ENCODE measurements at regions of chr6 and their contacts with region 1.

Region 1: DNA sequence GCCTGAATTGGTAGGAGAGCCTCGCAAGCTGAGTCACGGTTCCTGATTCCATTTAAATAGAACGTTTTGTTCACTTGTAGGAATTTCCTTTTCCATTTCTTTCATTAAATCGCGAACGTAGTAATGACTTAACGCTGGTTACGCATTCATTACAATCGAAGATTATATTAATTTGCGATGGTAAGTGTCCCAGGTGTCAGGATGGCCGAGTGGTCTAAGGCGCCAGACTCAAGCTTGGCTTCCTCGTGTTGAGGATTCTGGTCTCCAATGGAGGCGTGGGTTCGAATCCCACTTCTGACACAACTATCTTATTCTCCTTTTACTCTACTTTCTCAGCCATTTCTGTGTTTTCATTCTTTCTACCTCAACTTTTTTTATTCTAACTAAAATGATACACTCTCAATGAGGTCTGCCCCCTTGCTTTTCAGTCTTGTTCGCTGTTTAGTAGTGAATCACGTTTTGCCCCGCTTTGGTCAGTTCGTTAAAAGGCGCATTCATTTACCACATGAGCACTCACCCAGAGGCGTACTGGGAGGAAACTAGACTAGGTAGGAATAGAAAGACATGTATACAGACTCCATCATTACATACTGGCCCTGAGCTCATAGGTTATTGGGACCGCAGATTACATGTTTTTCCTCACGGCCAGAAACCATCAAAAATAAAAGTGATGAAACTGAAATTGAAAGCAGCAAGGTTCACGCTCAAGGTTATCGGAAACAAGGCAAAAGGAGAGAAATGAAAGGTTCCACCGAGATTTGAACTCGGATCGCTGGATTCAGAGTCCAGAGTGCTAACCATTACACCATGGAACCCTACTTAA is 17.3 kb upstream of the TRIM27 start:
- DNase-seq: peak; percentile 77 to 80
- H3K4me3 ChIP-seq: peak overlapping the region; percentile 65
- H3K27ac ChIP-seq: peak overlapping the region; percentile 76
- H3K4me1 ChIP-seq: peaks cover 24% of the 10 kb centered on the region
- H3K27me3 ChIP-seq: no peaks in the 10 kb centered on the region
- CTCF ChIP-seq: no peak

Region 2: GRCh38 chr6:28789553-28790083 is 151.5 kb before region 1 on chr6:
- CTCF ChIA-PET with region 1: no interaction called
- POLR2A ChIA-PET with region 1: no interaction called
- intact Hi-C with region 1: loop called (anchors 5 kb)
- DNase-seq: peak; percentile 61 to 64
- H3K4me3 ChIP-seq: peak overlapping the region; percentile 65
- H3K27ac ChIP-seq: no peak overlapping the region; the same call in 1 of the 2 replicates
- H3K4me1 ChIP-seq: peaks cover 5% of the 10 kb centered on the region; the same call in 1 of the 2 replicates
- H3K27me3 ChIP-seq: no peaks in the 10 kb centered on the region; the same call in 1 of the 2 replicates
- CTCF ChIP-seq: no peak

Region 3: GRCh38 chr6:28863604-28864320 is 77.3 kb before region 1 on chr6:
- CTCF ChIA-PET with region 1: no interaction called
- POLR2A ChIA-PET with region 1: no interaction called
- intact Hi-C with region 1: loop called (anchors 1 kb)
- DNase-seq: peak; percentile 77 to 85
- H3K4me3 ChIP-seq: peak overlapping the region; percentile 81
- H3K27ac ChIP-seq: peak overlapping the region; percentile 37
- H3K4me1 ChIP-seq: peaks cover 12% of the 10 kb centered on the region
- H3K27me3 ChIP-seq: no peaks in the 10 kb centered on the region
- CTCF ChIP-seq: peak; percentile 35; the same call in 1 of the 2 replicates

Region 4: DNA sequence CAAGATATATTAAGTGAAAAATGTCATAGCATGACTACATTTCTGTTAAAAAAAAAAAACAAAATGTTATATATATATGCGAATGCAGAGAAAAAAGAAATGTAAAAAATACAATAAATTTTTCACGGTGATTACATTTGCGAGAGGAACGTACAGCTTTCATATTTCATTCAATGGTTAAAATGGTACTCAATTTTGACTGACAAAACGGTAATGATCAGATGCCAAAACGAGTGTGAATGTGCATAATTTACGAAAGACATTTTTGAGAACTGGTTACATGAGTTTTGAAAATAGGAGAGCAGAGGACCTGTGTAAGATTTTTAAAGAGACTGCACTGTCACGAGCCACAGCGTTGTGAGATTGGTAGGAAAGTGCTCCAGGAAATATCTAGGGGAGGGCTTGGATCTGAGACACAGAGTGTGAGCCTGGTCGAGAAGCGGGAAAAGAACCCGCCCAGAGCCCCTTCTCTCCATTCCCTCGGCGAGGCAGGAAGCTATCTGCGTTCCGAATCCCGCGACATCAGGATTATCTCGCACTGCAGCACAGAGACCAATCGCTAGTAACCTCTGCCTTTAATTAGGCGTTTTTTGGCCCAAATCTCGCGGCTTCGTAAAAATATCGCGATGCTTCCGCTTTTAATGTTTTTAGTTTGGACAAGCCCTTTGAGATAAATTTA is 45.8 kb before region 1 on chr6:
- CTCF ChIA-PET with region 1: no interaction called
- POLR2A ChIA-PET with region 1: no interaction called
- intact Hi-C with region 1: loop called (anchors 1 kb)
- DNase-seq: peak; percentile 92
- H3K4me3 ChIP-seq: peak overlapping the region; percentile 92
- H3K27ac ChIP-seq: peak overlapping the region; percentile 89
- H3K4me1 ChIP-seq: peaks cover 7% of the 10 kb centered on the region
- H3K27me3 ChIP-seq: no peaks in the 10 kb centered on the region
- CTCF ChIP-seq: no peak

Region 5: GRCh38 chr6:28969129-28969528 is 28.1 kb after region 1 on chr6:
- CTCF ChIA-PET with region 1: interaction called, 10 read pairs
- POLR2A ChIA-PET with region 1: no interaction called
- intact Hi-C with region 1: no loop called
- DNase-seq: no peak
- H3K4me3 ChIP-seq: no peak overlapping the region
- H3K27ac ChIP-seq: no peak overlapping the region
- H3K4me1 ChIP-seq: no peaks in the 10 kb centered on the region
- H3K27me3 ChIP-seq: no peaks in the 10 kb centered on the region
- CTCF ChIP-seq: no peak

Region 6: GRCh38 chr6:29016559-29017427 is 75.7 kb after region 1 on chr6:
- CTCF ChIA-PET with region 1: no interaction called
- POLR2A ChIA-PET with region 1: no interaction called
- intact Hi-C with region 1: loop called (anchors 1 kb)
- DNase-seq: peak; percentile 62 to 77
- H3K4me3 ChIP-seq: peak overlapping the region; percentile 73
- H3K27ac ChIP-seq: no peak overlapping the region
- H3K4me1 ChIP-seq: no peaks in the 10 kb centered on the region
- H3K27me3 ChIP-seq: no peaks in the 10 kb centered on the region
- CTCF ChIP-seq: peak; percentile 94

Region 7: DNA sequence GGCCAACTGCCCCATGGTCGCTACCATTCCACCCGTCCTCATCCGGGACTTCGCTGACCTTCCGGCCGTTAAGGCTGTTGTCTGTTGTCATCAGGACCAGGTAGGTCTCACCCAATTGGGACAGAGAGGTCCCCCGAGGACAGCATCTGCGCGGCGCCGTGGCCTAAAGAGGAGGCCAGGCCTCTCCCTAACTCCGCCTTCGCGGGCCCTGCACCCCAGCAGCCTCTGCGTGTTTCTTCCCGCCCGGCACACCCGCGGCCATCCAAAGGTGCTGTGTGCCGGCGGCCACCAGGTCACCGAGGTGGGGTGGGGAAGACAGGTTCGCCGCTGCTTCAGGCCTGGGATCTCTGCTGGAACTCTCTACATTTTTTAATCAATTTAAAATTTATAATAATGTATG is 94.9 kb after region 1 on chr6:
- CTCF ChIA-PET with region 1: no interaction called
- POLR2A ChIA-PET with region 1: no interaction called
- intact Hi-C with region 1: no loop called
- DNase-seq: no peak
- H3K4me3 ChIP-seq: no peak overlapping the region
- H3K27ac ChIP-seq: no peak overlapping the region
- H3K4me1 ChIP-seq: no peaks in the 10 kb centered on the region
- H3K27me3 ChIP-seq: 0 out of 2 replicates have a peak, but pooled peaks cover 5% of the 10 kb centered on the region
- CTCF ChIP-seq: no peak

Measured in PC-9 (cell line).